ENCODE measurements at regions of chr7 and their contacts with region 1.

Region 1: DNA sequence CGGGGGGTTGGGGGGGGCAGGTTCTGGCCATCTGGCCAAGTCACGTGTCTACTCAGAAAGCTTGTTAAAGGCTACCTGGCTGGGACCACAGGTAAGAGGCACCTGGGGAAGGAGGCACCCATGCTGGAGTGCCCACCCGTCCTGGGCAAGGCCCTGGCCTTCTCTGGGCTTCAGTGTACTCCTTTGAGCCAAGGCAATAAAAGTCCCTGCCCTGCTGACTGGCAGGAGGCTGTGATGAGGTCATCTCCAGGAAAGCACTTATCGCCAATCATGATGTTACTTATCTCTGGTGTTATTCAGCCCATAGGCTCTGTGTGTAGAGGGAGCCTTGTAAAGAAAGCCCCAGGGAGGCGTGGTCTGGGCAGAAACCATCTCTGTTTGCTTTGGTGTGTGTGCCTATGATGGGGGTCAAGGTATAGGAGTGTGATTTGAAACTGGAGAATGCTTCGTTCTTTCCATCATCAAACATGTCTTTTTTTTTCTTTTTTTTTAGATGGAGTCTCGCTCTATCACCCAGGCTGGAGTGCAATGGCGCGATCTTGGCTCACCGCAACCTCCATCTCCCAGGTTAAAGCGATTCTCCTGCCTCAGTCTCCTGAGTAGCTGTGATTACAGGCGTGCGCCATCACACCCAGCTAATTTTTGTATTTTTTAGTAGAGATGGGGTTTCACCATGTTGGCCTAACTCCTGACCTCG is 2.5 kb upstream of the CLDN4 start:
- DNase-seq: no peak
- H3K4me3 ChIP-seq: no peak overlapping the region
- H3K27ac ChIP-seq: no peak overlapping the region; the same call in 1 of the 2 replicates
- H3K4me1 ChIP-seq: peaks cover 22 to 52% (median 39%) of the 10 kb centered on the region in 4 experiments
- H3K27me3 ChIP-seq: peaks cover 0 to 4% (median 0%) of the 10 kb centered on the region in 4 experiments; a peak in 2 of 7 replicates
- CTCF ChIP-seq: no peak
- EP300 ChIP-seq: no peak
- POLR2A ChIP-seq: 0 out of 3 replicates have a peak, but pooled peaks of 1 of the 2 experiments have one; percentile 28
- RAD21 ChIP-seq: no peak

Region 2: GRCh38 chr7:73647725-73648592 is 180.3 kb before region 1 on chr7:
- CTCF ChIA-PET with region 1: no interaction called
- POLR2A ChIA-PET with region 1: no interaction called
- DNase-seq: peak in 1 of 2 experiments; percentile 76
- H3K4me3 ChIP-seq: peak overlapping the region; percentile 38 to 72 (median 50)
- H3K27ac ChIP-seq: no peak overlapping the region
- H3K4me1 ChIP-seq: peaks cover 0 to 14% (median 7%) of the 10 kb centered on the region in 4 experiments; a peak in 6 of 7 replicates
- H3K27me3 ChIP-seq: peaks cover 0 to 30% (median 25%) of the 10 kb centered on the region in 4 experiments; a peak in 6 of 7 replicates
- CTCF ChIP-seq: peak in 1 of 3 experiments; percentile 15; a peak in 1 of 4 replicates
- EP300 ChIP-seq: no peak
- POLR2A ChIP-seq: no peak
- RAD21 ChIP-seq: peak in 1 of 2 experiments; percentile 13; a peak in 1 of 4 replicates

Region 3: DNA sequence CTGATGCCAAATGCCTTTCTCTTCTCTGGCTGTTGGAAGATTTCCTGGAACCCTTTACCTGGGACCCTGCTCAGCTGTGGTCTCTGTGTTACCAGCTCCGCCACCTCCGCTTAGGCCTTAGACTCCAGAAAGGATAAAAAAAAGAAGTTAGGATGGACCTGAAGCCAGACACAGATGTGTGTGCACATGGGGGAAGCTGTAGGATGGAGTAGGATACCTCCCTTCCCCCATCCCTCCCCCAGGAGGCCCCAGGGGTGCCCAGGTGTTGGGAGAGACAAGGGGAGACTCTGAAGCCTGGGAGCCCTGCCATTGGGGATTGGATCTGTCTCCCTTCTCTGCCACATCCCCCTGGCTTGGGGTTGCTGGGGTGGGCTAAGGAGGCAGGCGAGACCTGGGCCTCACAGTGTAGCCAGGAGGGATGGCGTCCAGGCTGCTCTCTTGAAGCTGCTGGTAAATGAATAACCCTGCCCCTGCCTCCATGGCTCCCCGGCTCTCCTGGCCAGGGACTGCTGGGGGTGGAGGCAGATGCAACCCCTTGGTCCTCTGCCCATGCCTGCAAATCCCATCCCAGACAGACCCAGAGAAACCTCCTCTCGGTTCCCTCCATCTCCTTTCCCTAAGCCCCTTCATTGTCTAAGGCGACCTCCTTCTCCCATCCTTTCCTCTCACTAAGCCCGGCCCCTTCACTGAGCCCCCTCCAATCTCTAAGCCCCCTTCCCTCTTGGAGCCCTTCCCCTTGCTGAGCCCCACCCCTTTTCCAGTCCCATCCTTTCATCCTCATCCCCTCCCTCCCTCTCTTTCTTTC is 66.2 kb before region 1 on chr7:
- CTCF ChIA-PET with region 1: no interaction called
- POLR2A ChIA-PET with region 1: no interaction called
- DNase-seq: peak in 1 of 2 experiments; percentile 56
- H3K4me3 ChIP-seq: no peak overlapping the region; a peak in 1 of 8 replicates
- H3K27ac ChIP-seq: no peak overlapping the region
- H3K4me1 ChIP-seq: peaks cover 0 to 8% (median 3%) of the 10 kb centered on the region in 4 experiments; a peak in 4 of 7 replicates
- H3K27me3 ChIP-seq: no peaks in the 10 kb centered on the region; a peak in 1 of 7 replicates
- CTCF ChIP-seq: no peak
- EP300 ChIP-seq: no peak
- POLR2A ChIP-seq: peak in 1 of 2 experiments; percentile 41; a peak in 2 of 3 replicates
- RAD21 ChIP-seq: no peak

Region 4: GRCh38 chr7:73817121-73817520 is 11.1 kb before region 1 on chr7:
- CTCF ChIA-PET with region 1: interaction called, 52 read pairs
- POLR2A ChIA-PET with region 1: interaction called, 72 read pairs
- DNase-seq: no peak
- H3K4me3 ChIP-seq: no peak overlapping the region
- H3K27ac ChIP-seq: no peak overlapping the region
- H3K4me1 ChIP-seq: no peaks in the 10 kb centered on the region; a peak in 2 of 7 replicates
- H3K27me3 ChIP-seq: no peaks in the 10 kb centered on the region
- CTCF ChIP-seq: no peak
- EP300 ChIP-seq: no peak
- POLR2A ChIP-seq: no peak
- RAD21 ChIP-seq: no peak

Region 5: GRCh38 chr7:73842247-73842895 is 14.1 kb after region 1 on chr7 and contains the start of gene METTL27:
- CTCF ChIA-PET with region 1: interaction called, 65 read pairs
- POLR2A ChIA-PET with region 1: interaction called, 96 read pairs
- DNase-seq: peak; percentile 82 to 91
- H3K4me3 ChIP-seq: peak within 1 kb of the TSS; percentile 52 to 78 (median 58)
- H3K27ac ChIP-seq: 0 out of 2 replicates have a peak within 1 kb of the TSS, but pooled peaks have one; percentile 61
- H3K4me1 ChIP-seq: peaks cover 0 to 11% (median 5%) of the 10 kb centered on the region in 4 experiments; a peak in 5 of 7 replicates
- H3K27me3 ChIP-seq: no peaks in the 10 kb centered on the region
- CTCF ChIP-seq: no peak
- EP300 ChIP-seq: no peak
- POLR2A ChIP-seq: peak in 1 of 2 experiments; percentile 61; a peak in 2 of 3 replicates
- RAD21 ChIP-seq: no peak
- total RNA-seq, gene METTL27: 5.6 and 6.2 TPM in 2 replicates

Region 6: GRCh38 chr7:73851410-73852234 is 23.4 kb after region 1 on chr7:
- CTCF ChIA-PET with region 1: interaction called, 22 read pairs
- POLR2A ChIA-PET with region 1: interaction called, 28 read pairs
- DNase-seq: no peak
- H3K4me3 ChIP-seq: no peak overlapping the region
- H3K27ac ChIP-seq: no peak overlapping the region
- H3K4me1 ChIP-seq: 0 out of 7 replicates have a peak, but pooled peaks cover 0 to 2% (median 0%) of the 10 kb centered on the region in 4 experiments
- H3K27me3 ChIP-seq: peaks cover 0 to 3% (median 0%) of the 10 kb centered on the region in 4 experiments; a peak in 3 of 7 replicates
- CTCF ChIP-seq: no peak
- EP300 ChIP-seq: no peak
- POLR2A ChIP-seq: no peak
- RAD21 ChIP-seq: no peak

Region 7: DNA sequence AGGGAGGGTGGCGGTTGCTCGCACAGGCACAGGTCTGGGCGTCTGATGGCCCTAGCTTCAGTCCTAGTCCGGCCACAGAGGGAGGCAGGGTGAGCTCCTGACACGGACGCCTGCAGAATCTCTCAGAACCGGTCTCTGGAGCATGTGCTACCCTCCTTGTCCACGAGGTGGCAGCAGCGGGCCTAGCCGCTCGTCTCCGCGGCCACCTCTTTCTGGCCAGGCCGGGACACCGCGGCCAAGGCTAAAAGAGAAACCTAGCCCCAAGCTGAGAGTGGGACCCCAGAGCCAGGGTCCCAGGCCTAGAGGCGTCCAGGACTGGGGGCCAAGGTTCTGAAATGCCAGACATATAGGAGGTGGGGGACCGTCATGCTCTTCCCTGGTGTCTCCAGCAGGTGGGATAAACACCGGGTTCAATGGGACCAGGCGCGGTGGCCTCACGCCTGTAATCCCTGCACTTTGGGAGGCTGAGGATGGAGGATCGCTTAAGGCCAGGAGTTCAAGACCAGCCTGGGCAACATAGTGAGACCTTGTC is 378.4 kb after region 1 on chr7:
- CTCF ChIA-PET with region 1: no interaction called
- POLR2A ChIA-PET with region 1: no interaction called
- DNase-seq: peak; percentile 63 to 99
- H3K4me3 ChIP-seq: no peak overlapping the region
- H3K27ac ChIP-seq: no peak overlapping the region
- H3K4me1 ChIP-seq: 0 out of 7 replicates have a peak, but pooled peaks cover 0 to 2% (median 0%) of the 10 kb centered on the region in 4 experiments
- H3K27me3 ChIP-seq: no peaks in the 10 kb centered on the region
- CTCF ChIP-seq: peak; percentile 93 to 99 (median 95)
- EP300 ChIP-seq: no peak
- POLR2A ChIP-seq: no peak
- RAD21 ChIP-seq: peak; percentile 82 to 89